ENCODE measurements at regions of chr18 and their contacts with region 1.

Region 1: GRCh38 chr18:58792086-58792485 is 72.6 kb upstream of the ZNF532 start:
- DNase-seq: no peak
- ATAC-seq: no peak
- H3K4me3 ChIP-seq: no peak overlapping the region
- H3K27ac ChIP-seq: no peak overlapping the region
- H3K4me1 ChIP-seq: peaks cover 11% of the 10 kb centered on the region
- H3K27me3 ChIP-seq: no peaks in the 10 kb centered on the region

Region 2: GRCh38 chr18:58723810-58724595 is 68.1 kb before region 1 on chr18:
- intact Hi-C with region 1: no loop called
- DNase-seq: no peak
- ATAC-seq: peak; percentile 35 to 51
- H3K4me3 ChIP-seq: no peak overlapping the region
- H3K27ac ChIP-seq: no peak overlapping the region
- H3K4me1 ChIP-seq: no peaks in the 10 kb centered on the region
- H3K27me3 ChIP-seq: no peaks in the 10 kb centered on the region

Region 3: DNA sequence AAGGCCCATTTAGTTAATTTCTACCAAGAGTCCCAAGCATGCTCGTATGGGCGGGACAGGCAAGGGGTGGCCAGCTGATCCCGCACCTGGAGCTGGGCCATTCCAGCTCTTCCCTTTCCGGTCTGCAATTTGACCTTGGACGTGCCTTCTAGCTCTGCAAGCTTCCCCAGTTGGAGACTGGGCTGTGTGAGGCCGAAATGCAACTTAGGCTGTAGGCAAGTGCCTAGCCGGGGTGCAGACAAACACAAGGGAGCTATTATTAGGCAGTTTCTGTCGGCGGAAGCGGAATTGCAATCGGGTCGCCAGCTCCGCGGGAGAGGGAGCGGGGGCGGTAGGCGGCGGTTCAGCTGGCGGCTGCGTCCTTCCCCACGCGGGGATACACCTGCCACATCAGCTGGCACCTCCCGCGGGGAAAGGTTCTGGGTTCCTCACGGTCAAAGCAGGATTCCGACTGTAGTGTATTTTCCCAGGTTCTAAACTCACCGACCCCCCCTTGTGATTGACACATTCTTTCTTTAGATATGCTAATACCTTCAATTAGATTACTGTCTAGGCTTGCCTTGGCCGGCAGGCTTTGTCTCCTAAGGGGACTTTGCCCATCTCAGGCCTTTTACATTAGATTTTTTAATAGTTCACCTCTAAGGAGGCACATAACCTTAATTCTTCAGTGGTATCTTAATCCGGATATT is 55.4 kb after region 1 on chr18:
- intact Hi-C with region 1: loop called in 3 of 4 experiments (anchors 10 kb)
- DNase-seq: peak; percentile 27 to 76 (median 74)
- ATAC-seq: peak; percentile 50 to 64
- H3K4me3 ChIP-seq: peak overlapping the region; percentile 47
- H3K27ac ChIP-seq: peak overlapping the region; percentile 49
- H3K4me1 ChIP-seq: no peaks in the 10 kb centered on the region
- H3K27me3 ChIP-seq: no peaks in the 10 kb centered on the region

Measured in right cardiac atrium (tissue), 5 donors.